Dorsolateral prefrontal cortex (tissue), 120 donors: ENCODE measurements at regions of chr20 and their contacts with region 1.

Region 1: GRCh38 chr20:13819885-13820645 is 35.2 kb downstream of the NDUFAF5 start:
- DNase-seq: peak in 2 of 10 donors; percentile 13 to 25
- H3K4me3 ChIP-seq: no peak overlapping the region
- H3K27ac ChIP-seq: no peak overlapping the region
- H3K27me3 ChIP-seq: no peaks in the 10 kb centered on the region
- CTCF ChIP-seq: peak; percentile 56 to 82 (median 72)

Region 2: GRCh38 chr20:14055127-14055742 is 235.2 kb after region 1 on chr20:
- intact Hi-C with region 1: loop called (anchors 5 kb)
- DNase-seq: peak in 1 of 10 donors; percentile 17
- H3K4me3 ChIP-seq: no peak overlapping the region
- H3K27ac ChIP-seq: no peak overlapping the region
- H3K27me3 ChIP-seq: no peaks in the 10 kb centered on the region
- CTCF ChIP-seq: peak; percentile 45 to 87 (median 73)

Region 3: DNA sequence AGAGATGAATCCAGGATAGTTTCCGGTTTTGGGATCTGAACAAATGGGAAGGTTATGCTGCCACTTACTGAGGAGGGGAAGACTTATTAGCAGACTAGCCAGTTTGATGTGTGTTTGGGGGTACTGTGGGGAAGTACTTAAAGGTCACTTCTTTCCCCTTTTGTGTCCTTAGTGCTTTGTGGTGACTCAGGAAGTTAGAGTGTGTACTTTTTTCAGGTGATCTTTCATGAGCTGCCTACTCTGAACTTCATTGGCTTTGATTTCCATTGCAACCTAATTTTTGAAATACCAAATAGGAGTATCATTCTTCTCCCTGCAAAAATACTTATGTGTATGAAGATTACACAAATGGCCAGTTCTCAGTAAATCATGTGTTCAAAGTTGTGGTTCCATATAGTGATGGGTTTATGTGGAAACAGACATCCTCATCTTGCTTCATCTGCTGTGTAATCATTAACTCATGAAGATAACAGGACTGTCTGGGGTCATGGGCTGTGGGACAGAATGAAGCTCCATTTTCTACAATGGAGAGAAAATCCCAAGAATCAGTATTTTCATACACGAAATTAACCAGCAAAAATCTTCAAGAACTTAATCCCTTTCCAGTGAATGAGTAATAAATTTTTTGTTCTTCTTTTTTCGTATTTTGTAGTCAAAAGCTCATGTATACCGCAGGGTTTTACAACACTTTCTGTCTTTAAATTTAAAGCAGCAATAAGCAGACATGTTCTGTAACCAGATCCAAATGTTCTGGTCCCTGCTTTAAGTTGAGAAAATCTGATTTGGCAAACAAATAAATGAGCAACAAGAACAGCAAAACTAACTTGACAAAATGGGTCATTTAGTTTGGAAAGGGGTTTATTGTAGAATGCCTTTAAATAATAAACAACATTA is 789.5 kb after region 1 on chr20:
- intact Hi-C with region 1: no loop called
- DNase-seq: no peak
- H3K4me3 ChIP-seq: no peak overlapping the region
- H3K27ac ChIP-seq: no peak overlapping the region
- H3K27me3 ChIP-seq: no peaks in the 10 kb centered on the region
- CTCF ChIP-seq: no peak